Activated naive CD4-positive, alpha-beta T cell treated with anti-CD3 and anti-CD28 coated beads for 36 hours (primary cell): ENCODE measurements at regions of chr2 and their contacts with region 1.

Region 1: GRCh38 chr2:31962757-31963361 is 47.9 kb downstream of the MEMO1 start:
- DNase-seq: peak; percentile 64
- H3K4me3 Mint-ChIP-seq: no peak overlapping the region
- H3K27ac Mint-ChIP-seq: peak overlapping the region; percentile 52
- H3K4me1 Mint-ChIP-seq: peaks cover 48% of the 10 kb centered on the region
- H3K27me3 Mint-ChIP-seq: no peaks in the 10 kb centered on the region

Region 2: DNA sequence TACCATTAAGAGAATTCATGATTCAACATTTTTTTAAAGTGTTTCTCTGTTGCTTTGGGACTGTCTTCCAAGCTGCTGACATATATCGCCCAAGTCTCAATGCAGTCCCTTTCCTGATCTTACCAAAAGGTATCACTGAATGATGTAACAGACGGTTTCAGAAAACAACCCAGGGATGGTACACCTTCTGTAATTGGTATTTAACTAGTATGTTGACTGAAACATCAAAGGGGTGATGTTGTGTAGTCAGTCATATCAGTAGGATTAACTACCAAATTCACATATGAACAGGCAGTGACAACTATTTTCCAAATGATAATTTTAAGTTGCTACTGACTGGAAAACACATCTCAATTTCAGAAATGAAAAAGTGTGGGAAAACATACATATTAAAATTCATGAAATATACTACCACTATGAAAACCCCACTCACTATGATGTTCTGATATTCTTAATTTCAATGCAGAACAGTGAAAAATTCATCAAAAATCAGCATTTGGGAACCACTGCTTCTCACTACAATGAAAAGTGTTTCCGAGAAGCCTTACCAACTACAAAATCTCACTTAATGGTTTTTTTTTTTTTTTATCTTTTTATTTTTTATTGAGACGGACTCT is 11.8 kb before region 1 on chr2:
- CTCF ChIA-PET with region 1: no interaction called
- intact Hi-C with region 1: loop called (anchors 1 kb)
- DNase-seq: peak; percentile 24
- H3K4me3 Mint-ChIP-seq: no peak overlapping the region
- H3K27ac Mint-ChIP-seq: peak overlapping the region; percentile 41
- H3K4me1 Mint-ChIP-seq: peaks cover 40% of the 10 kb centered on the region
- H3K27me3 Mint-ChIP-seq: no peaks in the 10 kb centered on the region

Region 3: DNA sequence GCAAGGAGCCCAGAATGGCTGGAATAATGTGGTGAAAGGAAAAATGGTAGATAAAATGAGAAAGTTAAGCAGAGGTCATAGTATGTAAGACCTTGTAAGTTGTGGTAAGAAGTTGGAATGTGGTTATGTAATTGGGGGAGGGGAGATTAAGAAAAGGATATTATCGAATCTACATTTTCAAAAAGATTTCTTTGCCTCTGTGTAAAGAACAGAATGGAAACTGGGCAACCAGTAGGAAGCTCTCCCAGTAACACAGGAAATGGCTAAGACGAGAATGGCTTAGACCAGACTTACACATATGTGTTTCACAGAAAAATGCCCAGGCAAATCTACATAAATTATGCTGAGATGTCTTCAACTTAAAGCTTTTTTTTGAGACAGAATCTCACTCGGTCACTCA is 34.8 kb after region 1 on chr2:
- CTCF ChIA-PET with region 1: no interaction called
- intact Hi-C with region 1: no loop called
- DNase-seq: no peak
- H3K4me3 Mint-ChIP-seq: no peak overlapping the region
- H3K27ac Mint-ChIP-seq: peak overlapping the region; percentile 28
- H3K4me1 Mint-ChIP-seq: peaks cover 52% of the 10 kb centered on the region
- H3K27me3 Mint-ChIP-seq: no peaks in the 10 kb centered on the region